Left ventricle myocardium superior (tissue), 1 donor: ENCODE measurements at regions of chr3 and their contacts with region 1.

Region 1: DNA sequence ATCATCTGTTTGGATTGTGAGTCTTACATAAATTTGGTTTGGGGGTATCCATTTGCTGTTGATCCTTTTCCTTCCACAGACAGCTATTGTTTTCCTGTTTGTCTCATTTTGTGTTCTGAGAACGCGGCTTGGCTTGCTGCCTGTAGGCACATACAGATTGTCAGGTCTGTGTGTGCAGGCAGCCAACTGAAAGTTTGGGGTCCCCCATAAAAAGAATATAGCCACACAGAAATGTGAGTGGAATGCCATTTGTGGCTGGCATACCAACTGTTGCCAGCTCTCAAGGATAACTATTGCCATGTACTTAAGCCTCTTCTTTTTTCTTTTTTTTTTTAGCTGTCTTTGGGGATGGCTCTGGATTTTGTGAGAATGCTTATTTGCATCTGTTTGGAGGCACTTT is 1308.0 kb downstream of the ROBO1 start:
- DNase-seq: no peak
- ATAC-seq: no peak

Region 2: DNA sequence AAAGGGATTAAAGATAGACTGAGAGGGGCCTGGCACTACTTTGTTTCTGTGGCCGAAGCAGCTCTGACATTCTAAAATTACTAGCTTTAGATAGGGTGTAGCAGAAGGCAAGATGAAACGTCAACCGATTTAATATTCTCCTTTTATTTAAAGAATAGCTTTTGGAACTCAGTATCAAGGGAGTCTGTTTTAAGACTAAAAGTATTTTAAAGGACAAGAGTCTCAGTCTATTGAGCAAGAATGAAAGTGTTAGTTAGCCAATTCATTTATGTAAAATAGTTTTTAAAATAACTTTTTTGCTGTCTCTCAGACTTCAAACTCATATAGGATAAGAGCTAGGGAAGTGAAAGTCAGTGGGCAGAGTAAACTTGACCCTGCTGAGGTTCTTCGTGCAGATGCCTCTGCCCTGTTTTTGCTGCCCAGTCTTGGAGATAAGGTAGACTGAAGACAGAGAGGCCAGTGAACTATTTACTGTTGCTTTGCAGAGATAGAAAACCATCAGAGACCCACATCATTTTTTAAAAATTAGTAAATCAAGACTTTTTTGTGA is 329.0 kb before region 1 on chr3:
- intact Hi-C with region 1: no loop called
- DNase-seq: no peak
- ATAC-seq: no peak

Region 3: GRCh38 chr3:78402720-78403119 is 57.1 kb before region 1 on chr3:
- intact Hi-C with region 1: no loop called
- DNase-seq: no peak
- ATAC-seq: no peak

Region 4: DNA sequence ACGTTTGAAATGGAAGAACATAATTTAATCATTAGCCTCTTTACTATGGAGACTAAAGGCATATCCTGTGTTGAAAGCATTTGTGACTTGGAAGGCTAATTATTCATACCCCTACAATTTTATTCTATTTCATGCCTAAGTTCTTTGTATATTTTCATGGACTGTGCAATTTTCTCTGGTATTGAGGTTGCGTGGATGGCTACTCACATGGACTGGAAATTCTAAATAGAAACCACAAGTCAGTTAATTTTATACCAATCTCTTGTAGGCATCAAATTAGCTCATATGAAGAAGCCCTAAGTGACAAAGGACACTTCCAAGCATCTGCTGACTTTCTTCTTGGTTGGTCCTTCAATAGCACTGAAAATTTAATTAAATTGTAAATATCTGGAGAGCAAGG is 45.5 kb before region 1 on chr3:
- intact Hi-C with region 1: loop called (anchors 2 kb)
- DNase-seq: no peak
- ATAC-seq: no peak